ENCODE measurements at regions of chr6 and their contacts with region 1.

Region 1: DNA sequence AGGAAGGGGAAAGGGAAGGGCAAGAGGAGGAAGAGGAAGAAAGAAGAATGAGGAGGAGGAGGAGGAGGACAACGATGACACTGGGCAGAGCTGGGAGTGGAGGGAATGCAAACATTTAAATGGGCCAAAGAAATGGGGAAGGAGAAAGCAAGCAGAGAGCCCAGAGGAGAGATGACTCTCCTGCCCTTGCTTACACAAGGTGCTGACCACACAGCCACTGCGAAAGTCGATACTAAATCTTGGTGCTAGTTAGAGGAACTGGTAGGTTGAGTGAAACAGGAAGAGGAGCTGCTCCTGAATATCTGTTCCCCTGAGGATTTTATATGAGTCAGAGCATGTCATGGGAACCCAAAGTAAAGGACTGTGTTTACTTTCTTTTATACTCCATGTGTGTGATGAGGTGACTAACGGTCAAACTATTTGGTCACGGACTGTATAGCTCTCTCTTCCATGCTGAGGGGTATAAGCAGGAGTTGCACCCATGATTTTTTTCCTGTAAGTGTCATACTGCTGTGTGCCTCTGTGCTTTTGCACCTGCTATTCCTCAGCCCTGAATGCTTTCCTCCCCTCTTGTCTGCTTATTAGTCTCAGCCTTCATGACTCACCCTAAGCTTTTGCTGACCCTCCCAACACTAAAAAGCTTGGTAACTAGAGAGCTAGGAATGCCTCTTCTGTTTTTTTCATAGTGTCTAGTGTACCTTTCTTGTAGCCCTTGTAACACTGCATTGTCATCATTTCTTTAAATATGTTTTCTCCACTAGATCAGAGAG is 9.5 kb upstream of the PAQR8 start:
- DNase-seq: peak; percentile 93 to 99 (median 98)
- H3K4me3 ChIP-seq: peak overlapping the region in 2 of 3 experiments; percentile 27 to 61
- H3K4me3 Mint-ChIP-seq: peak overlapping the region; percentile 40 to 76
- H3K27ac ChIP-seq: peak overlapping the region; percentile 81 to 82
- H3K27ac Mint-ChIP-seq: peak overlapping the region; percentile 86 to 97 (median 92)
- H3K4me1 ChIP-seq: peaks cover 34 to 36% of the 10 kb centered on the region in 2 donors
- H3K4me1 Mint-ChIP-seq: peaks cover 36% of the 10 kb centered on the region
- H3K27me3 ChIP-seq: no peaks in the 10 kb centered on the region
- H3K27me3 Mint-ChIP-seq: peaks cover 0 to 1% (median 0%) of the 10 kb centered on the region in 3 donors
- CTCF ChIP-seq: no peak

Region 2: DNA sequence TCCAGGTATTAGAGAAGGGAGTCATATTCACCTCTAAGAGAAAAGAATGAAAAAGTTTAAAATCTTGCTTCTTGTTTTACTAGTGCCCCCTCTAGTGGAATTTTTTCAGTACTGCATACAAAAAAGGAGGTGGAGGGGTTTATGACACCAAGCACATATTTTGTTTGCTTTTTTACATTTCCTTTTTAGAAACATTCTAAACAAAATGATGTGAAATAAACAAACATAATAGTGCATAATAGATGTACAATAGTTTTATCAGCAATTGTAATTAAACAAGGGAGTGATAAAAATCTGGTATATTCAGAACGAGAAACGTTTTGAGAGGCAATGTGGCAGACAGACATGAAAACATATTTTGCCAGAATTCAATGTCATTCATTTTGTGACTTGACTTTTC is 1750.1 kb before region 1 on chr6:
- intact Hi-C with region 1: no loop called
- DNase-seq: no peak
- H3K4me3 ChIP-seq: no peak overlapping the region
- H3K4me3 Mint-ChIP-seq: no peak overlapping the region
- H3K27ac ChIP-seq: no peak overlapping the region
- H3K27ac Mint-ChIP-seq: no peak overlapping the region
- H3K4me1 ChIP-seq: no peaks in the 10 kb centered on the region
- H3K4me1 Mint-ChIP-seq: no peaks in the 10 kb centered on the region
- H3K27me3 ChIP-seq: no peaks in the 10 kb centered on the region
- H3K27me3 Mint-ChIP-seq: peaks cover 0 to 3% (median 0%) of the 10 kb centered on the region in 3 donors
- CTCF ChIP-seq: peak; percentile 86

Region 3: DNA sequence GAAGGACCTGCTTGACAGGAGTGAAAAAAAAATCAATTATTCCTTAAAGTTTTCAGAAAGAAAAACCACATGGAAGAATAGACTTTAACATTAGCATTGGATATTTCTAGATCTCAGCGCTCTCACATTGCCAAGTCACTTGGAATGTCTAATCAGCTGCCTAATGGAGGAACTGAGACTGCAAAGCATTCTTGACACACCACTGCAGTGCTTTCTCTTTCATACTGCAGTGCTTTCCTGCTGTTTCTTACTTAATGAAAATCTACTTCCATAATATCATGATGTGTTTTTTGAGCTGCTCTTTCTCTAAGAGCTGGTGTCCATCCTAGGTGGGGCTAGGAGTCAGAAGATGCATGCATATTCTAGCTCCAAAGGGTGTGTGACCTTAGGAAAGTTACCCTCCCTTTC is 47.4 kb before region 1 on chr6:
- intact Hi-C with region 1: loop called (anchors 5 kb)
- DNase-seq: peak; percentile 69 to 87 (median 76)
- H3K4me3 ChIP-seq: peak overlapping the region; percentile 10 to 69 (median 42)
- H3K4me3 Mint-ChIP-seq: peak overlapping the region; percentile 59 to 75
- H3K27ac ChIP-seq: peak overlapping the region; percentile 86 to 92
- H3K27ac Mint-ChIP-seq: peak overlapping the region; percentile 89 to 98 (median 96)
- H3K4me1 ChIP-seq: peaks cover 54 to 63% of the 10 kb centered on the region in 2 donors
- H3K4me1 Mint-ChIP-seq: peaks cover 58% of the 10 kb centered on the region
- H3K27me3 ChIP-seq: no peaks in the 10 kb centered on the region
- H3K27me3 Mint-ChIP-seq: no peaks in the 10 kb centered on the region
- CTCF ChIP-seq: no peak